Activated CD4-positive, alpha-beta memory T cell treated with anti-CD3 and anti-CD28 coated beads, Interleukin-2, amount 10 ng/mL, durations not matched to agents 7 days and 5 days (primary cell): ENCODE measurements at regions of chr2 and their contacts with region 1.

Region 1: GRCh38 chr2:96638144-96639121 is at the start of gene KANSL3:
- DNase-seq: peak; percentile 92
- H3K4me3 Mint-ChIP-seq: peak within 1 kb of the TSS; percentile 96
- H3K27ac Mint-ChIP-seq: peak within 1 kb of the TSS; percentile 92
- H3K4me1 Mint-ChIP-seq: peaks cover 43% of the 10 kb centered on the region
- H3K27me3 Mint-ChIP-seq: peaks cover 8% of the 10 kb centered on the region
- total RNA-seq, gene KANSL3: 58.2 to 60.9 TPM

Region 2: GRCh38 chr2:96449637-96450036 is 188.8 kb before region 1 on chr2:
- CTCF ChIA-PET with region 1: no interaction called
- POLR2A ChIA-PET with region 1: no interaction called
- DNase-seq: no peak
- H3K4me3 Mint-ChIP-seq: no peak overlapping the region
- H3K27ac Mint-ChIP-seq: no peak overlapping the region
- H3K4me1 Mint-ChIP-seq: no peaks in the 10 kb centered on the region
- H3K27me3 Mint-ChIP-seq: no peaks in the 10 kb centered on the region

Region 3: DNA sequence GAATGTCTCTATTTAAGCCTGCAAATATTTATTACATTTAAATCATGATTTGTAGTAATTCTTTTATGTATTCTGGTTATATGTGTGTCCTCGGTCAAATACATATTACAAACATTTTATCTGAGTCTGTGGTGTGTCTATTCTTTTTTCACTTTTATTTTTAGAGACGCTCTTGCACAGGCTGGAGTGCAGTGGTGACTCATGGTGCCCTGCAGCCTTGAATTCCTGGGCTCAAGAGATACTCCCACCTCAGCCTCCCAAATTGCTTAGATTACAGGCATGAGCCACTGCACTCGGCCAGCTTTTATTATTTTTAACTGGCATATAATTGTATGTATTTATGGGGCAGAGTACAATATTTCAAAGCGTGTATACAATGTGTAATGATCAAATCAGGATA is 54.4 kb before region 1 on chr2:
- CTCF ChIA-PET with region 1: no interaction called
- POLR2A ChIA-PET with region 1: no interaction called
- DNase-seq: no peak
- H3K4me3 Mint-ChIP-seq: no peak overlapping the region
- H3K27ac Mint-ChIP-seq: no peak overlapping the region
- H3K4me1 Mint-ChIP-seq: peaks cover 14% of the 10 kb centered on the region
- H3K27me3 Mint-ChIP-seq: no peaks in the 10 kb centered on the region

Region 4: GRCh38 chr2:96594691-96595152 is 43.7 kb before region 1 on chr2:
- CTCF ChIA-PET with region 1: interaction called, 4 read pairs
- POLR2A ChIA-PET with region 1: interaction called, 32 read pairs
- DNase-seq: peak; percentile 51
- H3K4me3 Mint-ChIP-seq: peak overlapping the region; percentile 26
- H3K27ac Mint-ChIP-seq: peak overlapping the region; percentile 92
- H3K4me1 Mint-ChIP-seq: peaks cover 65% of the 10 kb centered on the region
- H3K27me3 Mint-ChIP-seq: no peaks in the 10 kb centered on the region

Region 5: DNA sequence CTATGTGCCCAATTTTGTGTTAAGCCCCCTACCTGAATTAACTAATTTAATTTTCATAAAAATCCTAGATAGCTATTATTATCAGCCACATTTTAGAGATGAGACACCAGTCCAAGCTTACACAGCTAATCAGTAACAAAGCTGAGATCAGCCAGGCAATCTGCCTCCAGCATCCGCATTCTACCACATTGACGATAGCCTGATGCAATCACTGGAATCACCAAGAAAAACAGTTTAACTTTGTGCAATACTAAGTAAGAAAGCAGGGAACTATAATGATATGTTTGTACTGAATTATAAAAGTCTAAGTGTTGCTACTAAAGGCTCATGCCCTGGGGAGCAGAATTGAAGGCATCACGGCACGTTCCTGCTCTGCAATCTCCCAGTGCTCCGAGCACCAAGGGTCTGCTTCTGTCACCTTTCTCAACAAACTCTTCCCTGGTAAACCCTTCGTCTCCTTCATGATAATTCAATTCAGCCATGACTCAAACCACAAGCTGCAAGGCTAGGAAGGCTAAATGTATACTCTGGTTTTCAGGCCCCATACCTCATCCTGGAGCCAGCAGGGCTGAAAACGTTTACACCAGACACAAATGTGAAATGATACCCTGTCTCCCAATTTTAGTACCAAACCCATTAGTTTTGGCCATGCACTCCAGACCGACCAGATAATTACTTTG is 19.7 kb before region 1 on chr2:
- CTCF ChIA-PET with region 1: interaction called, 6 read pairs
- POLR2A ChIA-PET with region 1: interaction called, 58 read pairs
- DNase-seq: no peak
- H3K4me3 Mint-ChIP-seq: no peak overlapping the region
- H3K27ac Mint-ChIP-seq: peak overlapping the region; percentile 7
- H3K4me1 Mint-ChIP-seq: peaks cover 49% of the 10 kb centered on the region
- H3K27me3 Mint-ChIP-seq: no peaks in the 10 kb centered on the region

Region 6: DNA sequence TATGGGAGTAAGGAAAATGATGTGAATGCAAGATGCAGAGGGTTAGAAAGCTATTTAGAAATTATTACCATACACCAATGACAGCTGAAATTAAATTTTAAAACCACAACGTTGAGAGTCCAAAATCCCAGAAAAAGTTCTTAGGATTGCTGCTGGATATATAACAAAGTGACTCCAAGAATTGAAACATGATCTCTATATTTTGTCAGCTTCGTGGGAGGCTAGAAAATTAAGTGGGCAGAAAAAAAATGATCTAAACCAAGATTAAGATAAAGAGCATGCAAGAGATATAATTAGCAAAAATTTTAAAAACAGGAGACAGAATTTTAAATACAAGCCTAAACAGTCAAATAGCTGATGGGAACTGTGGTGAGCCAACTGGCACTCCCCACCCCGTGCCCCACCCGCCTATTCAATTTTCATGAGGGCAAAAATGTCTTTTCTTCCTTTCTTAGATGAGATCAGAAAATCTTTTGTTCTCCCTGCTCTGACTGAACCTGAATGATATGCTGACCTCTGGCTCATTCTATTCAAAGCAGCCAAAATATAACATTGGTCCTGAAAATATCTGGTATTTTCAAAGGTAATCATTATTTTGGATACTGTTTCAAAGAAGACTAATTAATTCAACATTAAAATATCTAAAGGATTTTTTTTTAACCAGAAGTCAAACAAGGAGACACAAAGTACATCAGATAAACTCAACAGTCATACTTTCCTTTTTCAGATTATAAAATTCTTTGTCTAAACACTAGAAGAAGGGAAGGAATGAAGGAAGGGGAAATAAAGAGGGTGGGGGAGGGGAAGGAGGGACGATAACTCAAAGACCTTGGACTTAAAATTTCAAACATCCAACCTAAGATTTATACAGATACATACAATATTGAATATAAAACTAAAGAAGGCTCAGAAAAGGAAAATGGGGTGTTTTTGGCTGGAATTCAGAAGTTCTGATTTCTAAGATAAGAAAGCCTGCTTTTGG is 12.6 kb before region 1 on chr2:
- CTCF ChIA-PET with region 1: interaction called, 3 read pairs
- POLR2A ChIA-PET with region 1: interaction called, 58 read pairs
- DNase-seq: no peak
- H3K4me3 Mint-ChIP-seq: no peak overlapping the region
- H3K27ac Mint-ChIP-seq: peak overlapping the region; percentile 41
- H3K4me1 Mint-ChIP-seq: peaks cover 26% of the 10 kb centered on the region
- H3K27me3 Mint-ChIP-seq: no peaks in the 10 kb centered on the region

Region 7: DNA sequence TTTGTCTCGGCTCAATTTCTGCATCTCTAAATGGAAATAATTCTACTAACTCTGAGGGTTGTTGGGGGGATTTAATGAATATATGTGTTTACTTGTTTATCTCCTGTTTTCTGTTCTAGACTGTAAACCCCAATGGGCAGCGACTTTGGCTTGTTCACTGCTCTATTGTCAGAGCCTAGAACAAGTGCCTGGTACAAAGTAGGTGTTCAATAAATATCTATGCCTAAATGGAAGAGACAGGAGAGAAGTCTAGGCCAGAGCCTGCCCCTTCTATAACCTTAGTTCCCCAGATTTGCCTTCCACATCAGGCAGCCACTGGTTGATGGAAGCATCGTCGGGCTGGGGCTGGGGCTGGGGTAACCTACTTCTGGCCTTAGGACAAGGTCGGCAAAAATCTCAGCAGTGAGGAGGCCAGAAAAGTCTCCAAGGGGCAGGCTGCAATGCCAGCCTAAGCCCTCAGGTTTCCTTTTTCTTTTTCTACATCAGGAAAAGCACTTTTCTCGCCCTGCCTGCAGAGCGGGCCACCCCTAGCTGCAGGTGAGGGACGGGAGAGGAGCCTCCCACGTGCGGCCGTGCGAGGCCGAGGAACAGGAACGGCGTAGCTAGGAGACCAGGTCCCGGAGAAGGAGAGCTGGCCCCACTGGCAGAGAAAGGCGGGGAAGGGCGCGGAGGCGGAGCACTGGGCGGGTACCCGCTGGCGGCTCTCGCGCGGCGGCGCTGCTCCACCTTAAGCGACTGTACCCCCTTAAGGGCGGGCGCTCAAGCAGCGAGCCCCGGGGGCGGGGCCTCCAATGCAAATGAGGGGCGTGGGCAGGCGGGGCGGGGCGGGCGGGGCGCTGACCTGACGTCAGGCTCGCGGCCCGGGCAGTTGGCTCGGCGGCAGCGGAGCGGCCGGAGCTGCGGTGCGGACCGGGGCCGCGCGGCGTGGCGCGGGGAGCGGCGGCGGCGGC is 121.9 kb after region 1 on chr2 and contains the start of gene CNNM4:
- CTCF ChIA-PET with region 1: interaction called, 3 read pairs
- POLR2A ChIA-PET with region 1: interaction called, 13 read pairs
- DNase-seq: peak; percentile 92
- H3K4me3 Mint-ChIP-seq: peak within 1 kb of the TSS; percentile 83
- H3K27ac Mint-ChIP-seq: peak within 1 kb of the TSS; percentile 72
- H3K4me1 Mint-ChIP-seq: peaks cover 48% of the 10 kb centered on the region
- H3K27me3 Mint-ChIP-seq: no peaks in the 10 kb centered on the region
- total RNA-seq, gene CNNM4: 8.6 to 9.4 TPM